Activated B cell treated with CpG ODN at 0.5 μM for 24 hours (primary cell): ENCODE measurements at regions of chr22 and their contacts with region 1.

Region 1: GRCh38 chr22:42515896-42516295 is 3.7 kb downstream of the RRP7A start:
- DNase-seq: no peak
- ATAC-seq: no peak
- H3K4me3 Mint-ChIP-seq: no peak overlapping the region
- H3K27ac Mint-ChIP-seq: no peak overlapping the region
- H3K4me1 Mint-ChIP-seq: peaks cover 17% of the 10 kb centered on the region
- H3K27me3 Mint-ChIP-seq: no peaks in the 10 kb centered on the region
- CTCF ChIP-seq: no peak

Region 2: GRCh38 chr22:41908411-41909309 is 607.2 kb before region 1 on chr22:
- CTCF ChIA-PET with region 1: no interaction called
- POLR2A ChIA-PET with region 1: no interaction called
- intact Hi-C with region 1: no loop called
- DNase-seq: no peak
- ATAC-seq: no peak
- H3K4me3 Mint-ChIP-seq: peak overlapping the region; percentile 46
- H3K27ac Mint-ChIP-seq: peak overlapping the region; percentile 46
- H3K4me1 Mint-ChIP-seq: peaks cover 47% of the 10 kb centered on the region
- H3K27me3 Mint-ChIP-seq: peaks cover 10% of the 10 kb centered on the region
- CTCF ChIP-seq: no peak

Region 3: GRCh38 chr22:42500161-42500835 is 15.6 kb before region 1 on chr22:
- CTCF ChIA-PET with region 1: no interaction called
- POLR2A ChIA-PET with region 1: no interaction called
- intact Hi-C with region 1: loop called (anchors 2 kb)
- DNase-seq: peak; percentile 84
- ATAC-seq: peak; percentile 89
- H3K4me3 Mint-ChIP-seq: peak overlapping the region; percentile 70
- H3K27ac Mint-ChIP-seq: no peak overlapping the region
- H3K4me1 Mint-ChIP-seq: peaks cover 12% of the 10 kb centered on the region
- H3K27me3 Mint-ChIP-seq: no peaks in the 10 kb centered on the region
- CTCF ChIP-seq: no peak